ENCODE measurements at regions of chr3 and their contacts with region 1.

Region 1: GRCh38 chr3:187822402-187822801 is 77.1 kb upstream of the BCL6 start:
- DNase-seq: no peak
- H3K4me3 ChIP-seq: no peak overlapping the region
- H3K27ac ChIP-seq: no peak overlapping the region
- H3K4me1 ChIP-seq: no peaks in the 10 kb centered on the region
- H3K27me3 ChIP-seq: no peaks in the 10 kb centered on the region
- CTCF ChIP-seq: no peak
- POLR2A ChIP-seq: no peak

Region 2: DNA sequence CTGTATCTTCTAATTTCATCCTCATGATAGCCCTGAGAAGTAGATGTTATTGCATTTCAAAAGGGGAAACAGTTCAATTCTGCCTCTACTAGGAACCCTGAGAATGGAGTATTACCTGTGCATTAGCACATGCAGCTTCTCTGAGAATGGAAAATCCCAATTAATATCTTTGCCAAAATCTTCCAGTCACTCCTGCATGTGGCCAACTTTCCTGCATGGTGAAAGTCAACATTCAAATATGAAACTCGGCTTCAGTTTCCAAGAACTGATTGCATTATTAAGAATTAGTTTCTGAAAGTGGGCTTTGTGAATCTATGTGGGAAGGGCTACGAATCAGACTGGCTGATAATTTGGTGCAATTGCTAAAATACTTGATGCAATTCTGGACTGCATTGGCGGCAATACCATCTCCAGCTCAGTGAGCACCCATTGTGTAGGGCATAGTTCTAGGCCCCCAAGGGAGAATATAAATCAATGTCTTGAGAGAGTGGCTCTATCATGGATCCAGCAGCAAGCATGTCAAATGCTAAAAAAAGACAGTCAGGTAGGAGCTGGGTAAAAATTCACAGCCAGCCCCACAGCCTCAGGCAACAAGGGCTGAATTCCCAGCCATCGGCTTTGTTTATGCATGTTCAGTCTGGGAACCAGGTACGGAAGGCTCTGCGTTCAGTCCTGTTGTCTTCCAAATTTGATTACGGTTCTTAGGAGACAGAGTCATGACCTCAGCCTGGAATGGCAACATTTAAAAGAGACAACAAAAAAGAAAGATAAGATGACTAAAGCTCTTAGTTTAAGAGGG is 58.4 kb before region 1 on chr3:
- intact Hi-C with region 1: loop called (anchors 2 kb)
- DNase-seq: peak; percentile 29 to 59
- H3K4me3 ChIP-seq: peak overlapping the region in 1 of 3 donors; percentile 34
- H3K27ac ChIP-seq: peak overlapping the region; percentile 79 to 80
- H3K4me1 ChIP-seq: peaks cover 0 to 4% of the 10 kb centered on the region in 2 donors
- H3K27me3 ChIP-seq: no peaks in the 10 kb centered on the region
- CTCF ChIP-seq: no peak
- POLR2A ChIP-seq: no peak

Measured in breast epithelium (tissue), 4 donors.